PC-9 (cell line): ENCODE measurements at regions of chr4 and their contacts with region 1.

Region 1: GRCh38 chr4:121869841-121870656 is at the start of gene BBS7:
- DNase-seq: peak; percentile 93 to 96
- H3K4me3 ChIP-seq: peak within 1 kb of the TSS; percentile 73
- H3K27ac ChIP-seq: peak within 1 kb of the TSS; percentile 33; the same call in 1 of the 2 replicates
- H3K4me1 ChIP-seq: peaks cover 9% of the 10 kb centered on the region
- H3K27me3 ChIP-seq: no peaks in the 10 kb centered on the region
- CTCF ChIP-seq: no peak
- total RNA-seq, gene BBS7: 20.3 and 21.4 TPM in 2 replicates

Region 2: GRCh38 chr4:121633653-121634052 is 236.4 kb before region 1 on chr4:
- CTCF ChIA-PET with region 1: no interaction called
- POLR2A ChIA-PET with region 1: no interaction called
- intact Hi-C with region 1: no loop called
- DNase-seq: no peak
- H3K4me3 ChIP-seq: no peak overlapping the region
- H3K27ac ChIP-seq: no peak overlapping the region
- H3K4me1 ChIP-seq: no peaks in the 10 kb centered on the region
- H3K27me3 ChIP-seq: no peaks in the 10 kb centered on the region
- CTCF ChIP-seq: no peak

Region 3: GRCh38 chr4:121823505-121824170 is 46.4 kb before region 1 on chr4 and contains the start of gene CCNA2:
- CTCF ChIA-PET with region 1: no interaction called
- POLR2A ChIA-PET with region 1: interaction called, 8 read pairs
- intact Hi-C with region 1: loop called (anchors 1 kb)
- DNase-seq: peak; percentile 92 to 93
- H3K4me3 ChIP-seq: peak within 1 kb of the TSS; percentile 85
- H3K27ac ChIP-seq: peak within 1 kb of the TSS; percentile 25; the same call in 1 of the 2 replicates
- H3K4me1 ChIP-seq: peaks cover 27% of the 10 kb centered on the region
- H3K27me3 ChIP-seq: no peaks in the 10 kb centered on the region
- CTCF ChIP-seq: no peak
- total RNA-seq, gene CCNA2: 61.9 and 70.7 TPM in 2 replicates

Region 4: GRCh38 chr4:121842862-121843261 is 27.2 kb before region 1 on chr4:
- CTCF ChIA-PET with region 1: no interaction called
- POLR2A ChIA-PET with region 1: interaction called, 10 read pairs
- intact Hi-C with region 1: no loop called
- DNase-seq: no peak
- H3K4me3 ChIP-seq: no peak overlapping the region
- H3K27ac ChIP-seq: no peak overlapping the region
- H3K4me1 ChIP-seq: no peaks in the 10 kb centered on the region
- H3K27me3 ChIP-seq: no peaks in the 10 kb centered on the region
- CTCF ChIP-seq: no peak